PC-3 (cell line): ENCODE measurements at regions of chr1 and their contacts with region 1.

Region 1: GRCh38 chr1:34896613-34897012 is 32.8 kb downstream of the DLGAP3 start:
- DNase-seq: no peak
- ATAC-seq: peak; percentile 73
- H3K4me3 ChIP-seq: no peak overlapping the region
- H3K27ac ChIP-seq: no peak overlapping the region
- H3K4me1 ChIP-seq: no peaks in the 10 kb centered on the region
- H3K27me3 ChIP-seq: peaks cover 23% of the 10 kb centered on the region
- CTCF ChIP-seq: peak; percentile 36

Region 2: GRCh38 chr1:34984793-34985608 is 88.4 kb after region 1 on chr1 and contains the start of gene TMEM35B:
- CTCF ChIA-PET with region 1: no interaction called
- POLR2A ChIA-PET with region 1: no interaction called
- intact Hi-C with region 1: loop called (anchors 10 kb)
- DNase-seq: peak; percentile 48
- ATAC-seq: peak; percentile 72
- H3K4me3 ChIP-seq: peak within 1 kb of the TSS; percentile 98
- H3K27ac ChIP-seq: peak within 1 kb of the TSS; percentile 49
- H3K4me1 ChIP-seq: peaks cover 30% of the 10 kb centered on the region
- H3K27me3 ChIP-seq: no peaks in the 10 kb centered on the region
- CTCF ChIP-seq: no peak
- total RNA-seq, gene TMEM35B: 10.7 and 10.9 TPM in 2 replicates

Region 3: DNA sequence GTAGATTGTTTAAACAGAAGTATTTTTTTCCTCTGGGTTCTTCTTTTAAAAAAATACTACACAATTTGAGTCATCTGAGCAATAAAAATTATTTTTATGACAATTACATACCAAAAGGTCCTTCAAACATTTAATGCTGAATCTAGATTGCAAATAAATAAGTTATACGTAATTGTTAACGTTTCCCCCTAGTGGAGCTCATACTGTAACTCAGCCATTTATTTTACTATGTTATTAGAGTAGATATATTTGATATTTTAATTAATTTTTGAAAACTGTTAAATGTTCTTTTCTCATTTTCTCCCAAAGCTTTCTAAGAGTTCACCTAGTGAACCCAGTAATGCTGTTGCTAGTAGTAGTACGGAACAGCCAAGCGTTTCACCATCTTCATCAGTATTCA is 216.1 kb after region 1 on chr1:
- CTCF ChIA-PET with region 1: no interaction called
- POLR2A ChIA-PET with region 1: no interaction called
- intact Hi-C with region 1: loop called (anchors 1 kb)
- DNase-seq: peak; percentile 31
- ATAC-seq: peak; percentile 13; the same call in 1 of the 2 replicates
- H3K4me3 ChIP-seq: no peak overlapping the region
- H3K27ac ChIP-seq: no peak overlapping the region
- H3K4me1 ChIP-seq: peaks cover 13% of the 10 kb centered on the region
- H3K27me3 ChIP-seq: no peaks in the 10 kb centered on the region
- CTCF ChIP-seq: peak; percentile 40; the same call in 1 of the 2 replicates

Region 4: DNA sequence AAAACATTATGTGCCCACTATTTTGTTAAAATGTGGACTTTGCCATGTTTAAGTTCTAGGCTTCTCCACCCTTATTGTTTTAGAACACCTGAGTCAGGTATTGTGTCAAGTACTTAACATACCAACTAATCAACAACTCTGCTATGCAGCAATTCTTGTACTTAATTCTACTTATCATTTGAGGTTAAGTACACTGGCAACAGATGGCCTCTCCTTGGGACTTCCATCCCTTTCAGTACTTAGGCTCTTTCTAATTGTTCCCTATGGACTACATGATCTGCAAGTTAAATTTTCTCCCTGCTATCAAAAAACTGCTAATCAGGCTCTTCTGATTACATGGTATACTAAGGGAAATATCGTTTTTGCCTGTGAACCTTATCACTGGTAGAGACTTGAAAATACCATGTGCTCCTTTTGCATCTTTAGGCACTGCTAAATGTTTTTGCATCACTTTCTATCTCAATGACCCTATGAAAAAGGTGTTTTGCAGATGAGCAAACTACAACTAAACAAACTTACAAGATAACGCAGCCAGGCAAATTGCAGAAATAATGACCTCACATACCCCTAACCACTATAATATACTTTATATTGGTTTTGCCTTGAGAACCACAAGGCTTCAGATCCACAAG is 277.4 kb after region 1 on chr1:
- CTCF ChIA-PET with region 1: no interaction called
- POLR2A ChIA-PET with region 1: no interaction called
- intact Hi-C with region 1: loop called (anchors 5 kb)
- DNase-seq: no peak
- ATAC-seq: peak; percentile 12; the same call in 1 of the 2 replicates
- H3K4me3 ChIP-seq: no peak overlapping the region
- H3K27ac ChIP-seq: no peak overlapping the region
- H3K4me1 ChIP-seq: no peaks in the 10 kb centered on the region
- H3K27me3 ChIP-seq: no peaks in the 10 kb centered on the region
- CTCF ChIP-seq: no peak

Region 5: GRCh38 chr1:35192853-35193664 is 296.4 kb after region 1 on chr1 and contains the start of gene SFPQ:
- CTCF ChIA-PET with region 1: no interaction called
- POLR2A ChIA-PET with region 1: no interaction called
- intact Hi-C with region 1: loop called (anchors 5 kb)
- DNase-seq: peak; percentile 98
- ATAC-seq: peak; percentile 89
- H3K4me3 ChIP-seq: peak within 1 kb of the TSS; percentile 80
- H3K27ac ChIP-seq: peak within 1 kb of the TSS; percentile 59
- H3K4me1 ChIP-seq: 0 out of 2 replicates have a peak, but pooled peaks cover 11% of the 10 kb centered on the region
- H3K27me3 ChIP-seq: no peaks in the 10 kb centered on the region
- CTCF ChIP-seq: no peak
- total RNA-seq, gene SFPQ: 249 and 322 TPM in 2 replicates

Region 6: DNA sequence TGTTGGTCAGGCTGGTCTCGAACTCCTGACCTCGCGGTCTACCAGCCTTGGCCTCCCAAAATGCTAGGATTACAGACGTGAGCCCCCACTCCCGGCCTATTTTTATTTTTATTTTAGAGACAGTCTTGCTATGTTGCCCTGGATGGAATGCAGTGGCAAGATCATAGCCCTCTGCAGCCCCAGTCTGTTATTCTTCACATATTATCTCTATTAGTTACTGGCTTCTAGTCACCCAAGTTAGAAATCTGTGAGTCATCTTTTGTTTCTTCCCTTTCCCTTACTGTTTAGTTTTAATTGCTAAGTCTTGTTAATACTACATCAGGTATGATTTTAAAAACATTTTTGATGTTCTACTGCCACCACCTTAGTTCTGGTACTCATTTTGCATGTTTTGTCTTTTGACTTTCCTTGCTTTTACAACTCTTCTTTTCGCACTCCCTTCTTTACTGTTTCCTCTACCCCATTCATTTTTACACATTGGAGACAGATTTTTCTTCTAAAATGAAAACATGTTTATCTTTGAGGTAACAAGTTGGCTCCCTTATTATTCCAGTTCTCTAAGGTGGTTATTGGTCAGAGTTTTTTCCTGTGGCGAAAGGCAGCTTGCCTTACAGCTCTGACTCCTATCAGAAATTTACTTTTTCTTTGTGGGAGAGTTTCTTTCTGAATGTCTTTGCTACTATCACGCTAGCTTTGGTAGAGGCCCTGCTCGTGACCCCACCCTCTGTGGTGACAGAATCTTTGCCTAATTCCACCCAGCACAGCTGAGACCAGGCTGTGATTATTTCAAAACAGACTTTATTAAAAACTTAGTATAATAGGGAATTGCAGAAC is 391.4 kb after region 1 on chr1:
- CTCF ChIA-PET with region 1: no interaction called
- POLR2A ChIA-PET with region 1: no interaction called
- intact Hi-C with region 1: loop called (anchors 10 kb)
- DNase-seq: peak; percentile 31
- ATAC-seq: peak; percentile 87
- H3K4me3 ChIP-seq: no peak overlapping the region
- H3K27ac ChIP-seq: peak overlapping the region; percentile 28
- H3K4me1 ChIP-seq: peaks cover 18% of the 10 kb centered on the region
- H3K27me3 ChIP-seq: no peaks in the 10 kb centered on the region
- CTCF ChIP-seq: no peak